CD8-positive, alpha-beta T cell (primary cell): ENCODE measurements at regions of chr14 and their contacts with region 1.

Region 1: GRCh38 chr14:91893007-91893406 is 25.7 kb upstream of the TC2N start:
- DNase-seq: peak in 3 of 9 experiments; percentile 36 to 61 (median 53)
- ATAC-seq: peak; percentile 30
- H3K4me3 ChIP-seq: no peak overlapping the region
- H3K4me3 Mint-ChIP-seq: no peak overlapping the region
- H3K27ac ChIP-seq: no peak overlapping the region
- H3K27ac Mint-ChIP-seq: peak overlapping the region; percentile 57
- H3K4me1 ChIP-seq: peaks cover 56% of the 10 kb centered on the region
- H3K4me1 Mint-ChIP-seq: peaks cover 66% of the 10 kb centered on the region
- H3K27me3 ChIP-seq: no peaks in the 10 kb centered on the region
- H3K27me3 Mint-ChIP-seq: no peaks in the 10 kb centered on the region
- CTCF ChIP-seq: peak; percentile 50

Region 2: GRCh38 chr14:91714805-91715204 is 178.2 kb before region 1 on chr14:
- CTCF ChIA-PET with region 1: interaction called, 3 read pairs
- POLR2A ChIA-PET with region 1: no interaction called
- intact Hi-C with region 1: loop called in 1 of 2 experiments (anchors 5 kb)
- DNase-seq: peak in 8 of 9 experiments; percentile 27 to 69 (median 54)
- ATAC-seq: peak; percentile 99
- H3K4me3 ChIP-seq: no peak overlapping the region
- H3K4me3 Mint-ChIP-seq: peak overlapping the region; percentile 70
- H3K27ac ChIP-seq: no peak overlapping the region
- H3K27ac Mint-ChIP-seq: peak overlapping the region; percentile 72
- H3K4me1 ChIP-seq: peaks cover 13% of the 10 kb centered on the region
- H3K4me1 Mint-ChIP-seq: peaks cover 17% of the 10 kb centered on the region
- H3K27me3 ChIP-seq: no peaks in the 10 kb centered on the region
- H3K27me3 Mint-ChIP-seq: no peaks in the 10 kb centered on the region
- CTCF ChIP-seq: peak; percentile 19

Region 3: DNA sequence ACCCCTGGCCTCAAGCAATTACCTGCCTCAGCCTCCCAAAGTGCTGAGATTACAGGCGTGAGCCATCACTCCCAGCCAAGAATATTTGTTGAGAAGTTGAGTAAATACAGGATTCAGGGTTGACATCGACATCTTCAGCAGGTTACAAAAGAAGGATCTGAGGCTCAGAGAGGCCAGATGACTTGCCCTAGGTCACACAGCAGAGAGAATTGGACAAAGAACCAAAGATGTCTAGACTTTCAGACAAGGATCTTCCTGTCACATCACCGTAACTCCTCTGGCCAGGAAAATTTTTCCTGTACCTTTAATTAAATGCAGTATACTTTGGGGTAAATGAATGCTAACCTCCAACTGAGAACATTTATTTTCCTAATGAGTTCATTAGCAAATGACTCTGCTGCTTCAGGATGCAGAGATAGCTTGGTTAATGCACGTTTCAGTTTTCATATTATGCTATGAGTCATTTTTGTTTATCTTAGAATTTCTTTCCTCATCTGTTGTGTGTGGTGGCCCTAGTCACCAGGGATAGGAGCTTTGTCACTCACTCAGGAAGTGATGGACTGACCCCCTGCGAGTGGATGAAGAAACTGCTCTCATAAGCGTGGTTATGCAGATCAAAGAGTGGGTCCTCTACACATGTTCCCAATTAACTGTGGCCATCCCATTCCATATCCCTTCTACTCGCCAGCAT is 34.6 kb before region 1 on chr14:
- CTCF ChIA-PET with region 1: interaction called, 4 read pairs
- POLR2A ChIA-PET with region 1: interaction called, 4 read pairs
- intact Hi-C with region 1: loop called (anchors 5 kb)
- DNase-seq: peak in 2 of 9 experiments; percentile 32 to 47
- ATAC-seq: peak; percentile 55
- H3K4me3 ChIP-seq: no peak overlapping the region
- H3K4me3 Mint-ChIP-seq: peak overlapping the region; percentile 38
- H3K27ac ChIP-seq: peak overlapping the region in 1 of 2 experiments; percentile 56
- H3K27ac Mint-ChIP-seq: peak overlapping the region; percentile 89
- H3K4me1 ChIP-seq: peaks cover 96% of the 10 kb centered on the region
- H3K4me1 Mint-ChIP-seq: peaks cover 86% of the 10 kb centered on the region
- H3K27me3 ChIP-seq: no peaks in the 10 kb centered on the region
- H3K27me3 Mint-ChIP-seq: no peaks in the 10 kb centered on the region
- CTCF ChIP-seq: no peak

Region 4: DNA sequence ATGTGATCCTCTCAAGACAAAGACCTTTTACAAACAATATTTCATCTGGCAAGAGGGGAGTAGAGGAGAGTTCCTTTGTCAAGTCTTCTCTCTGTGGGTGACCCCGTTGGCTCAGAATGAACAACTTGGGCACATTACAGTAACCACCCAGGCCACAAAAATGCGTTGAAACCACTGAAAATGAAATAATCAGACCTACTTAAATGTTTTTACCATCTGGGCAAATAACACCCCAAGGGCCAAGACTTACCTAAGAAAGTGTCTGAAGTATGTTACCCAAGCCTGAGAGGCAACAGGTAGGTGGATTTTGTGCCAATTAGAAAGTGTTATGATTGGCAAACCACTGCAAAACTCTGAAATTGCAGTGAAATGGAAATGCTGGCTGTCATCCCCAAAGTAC is 26.9 kb before region 1 on chr14:
- CTCF ChIA-PET with region 1: interaction called, 5 read pairs
- POLR2A ChIA-PET with region 1: interaction called, 48 read pairs
- intact Hi-C with region 1: no loop called
- DNase-seq: peak in 5 of 9 experiments; percentile 25 to 59 (median 32)
- ATAC-seq: no peak
- H3K4me3 ChIP-seq: peak overlapping the region; percentile 61 to 80
- H3K4me3 Mint-ChIP-seq: peak overlapping the region; percentile 95
- H3K27ac ChIP-seq: peak overlapping the region; percentile 83 to 86
- H3K27ac Mint-ChIP-seq: peak overlapping the region; percentile 99
- H3K4me1 ChIP-seq: peaks cover 82% of the 10 kb centered on the region
- H3K4me1 Mint-ChIP-seq: peaks cover 90% of the 10 kb centered on the region
- H3K27me3 ChIP-seq: no peaks in the 10 kb centered on the region
- H3K27me3 Mint-ChIP-seq: no peaks in the 10 kb centered on the region
- CTCF ChIP-seq: no peak